Activated CD4-positive, alpha-beta T cell treated with anti-CD3 and anti-CD28 coated beads for 36 hours (primary cell): ENCODE measurements at regions of chr7 and their contacts with region 1.

Region 1: DNA sequence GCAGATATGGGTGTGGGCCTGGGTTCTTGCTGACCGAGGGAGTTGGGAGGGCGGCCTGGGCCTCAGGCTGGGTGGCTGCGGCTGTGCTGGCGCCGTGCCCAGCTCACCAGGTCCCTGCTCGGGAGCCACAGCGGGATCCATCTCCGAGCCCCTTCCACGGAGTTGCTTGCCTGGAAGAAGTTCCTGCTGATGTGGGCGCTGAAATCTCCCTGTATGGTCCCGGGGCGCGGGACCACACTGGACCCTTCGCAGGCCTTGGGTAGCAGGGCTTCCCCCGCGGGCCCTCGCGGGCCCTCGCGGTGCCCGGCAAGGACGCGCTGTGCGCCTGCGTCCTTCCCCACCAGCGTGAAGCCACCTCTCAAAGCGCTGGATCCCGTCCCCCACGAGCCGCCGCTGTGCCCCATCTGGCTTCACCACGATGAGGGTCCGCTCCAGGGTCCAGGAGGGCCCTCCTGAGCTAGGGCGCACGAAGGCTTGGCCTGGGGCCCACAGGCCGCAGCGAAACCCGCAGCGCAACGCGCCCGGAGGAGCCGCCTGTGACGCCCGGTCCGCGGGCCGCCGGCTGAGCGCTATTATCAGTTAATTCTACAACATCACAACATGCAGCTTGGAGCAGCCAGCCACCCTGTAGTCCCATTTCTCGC is 31.5 kb downstream of the RAB19 start:
- DNase-seq: no peak
- ATAC-seq: no peak
- H3K4me3 Mint-ChIP-seq: no peak overlapping the region
- H3K27ac Mint-ChIP-seq: no peak overlapping the region
- H3K4me1 Mint-ChIP-seq: peaks cover 8% of the 10 kb centered on the region
- H3K27me3 Mint-ChIP-seq: peaks cover 2% of the 10 kb centered on the region

Region 2: DNA sequence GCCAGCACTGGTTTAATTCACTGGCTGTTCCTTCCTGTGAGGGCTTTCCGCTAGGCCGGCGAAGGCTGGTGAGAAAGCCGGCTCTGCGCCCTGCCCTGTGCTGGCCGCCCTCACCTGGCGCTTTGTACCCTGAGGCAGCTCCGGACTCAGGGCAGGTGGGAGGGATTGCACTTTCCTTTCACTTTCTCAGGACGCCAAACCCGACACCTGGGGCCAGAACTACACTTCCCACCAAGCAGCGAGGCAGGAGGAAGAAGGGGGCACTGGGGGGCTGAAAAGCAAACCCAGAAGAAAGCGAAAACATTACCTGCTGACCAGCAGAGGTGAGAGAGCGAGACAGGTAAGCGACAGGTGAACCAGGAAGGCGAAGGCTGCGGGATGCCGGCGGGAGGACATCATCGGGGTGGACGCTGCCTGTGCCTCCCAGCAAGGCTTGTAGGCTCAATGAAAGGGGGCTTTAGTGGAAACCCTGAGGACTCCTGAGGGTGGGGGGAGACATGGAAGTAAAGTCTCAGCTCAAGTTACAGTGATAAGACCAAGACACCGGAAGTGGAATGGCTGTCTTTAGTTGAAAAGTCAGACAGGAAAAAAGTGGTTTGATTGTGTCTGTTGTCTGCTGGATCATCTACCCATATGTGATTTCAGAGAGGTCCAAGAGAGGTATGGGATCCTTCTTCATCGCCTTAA is 31.4 kb before region 1 on chr7 and contains the start of gene RAB19:
- CTCF ChIA-PET with region 1: no interaction called
- POLR2A ChIA-PET with region 1: no interaction called
- intact Hi-C with region 1: loop called in 1 of 2 experiments (anchors 5 kb)
- DNase-seq: peak; percentile 63
- ATAC-seq: peak; percentile 77
- H3K4me3 Mint-ChIP-seq: peak within 1 kb of the TSS; percentile 90
- H3K27ac Mint-ChIP-seq: peak within 1 kb of the TSS; percentile 97
- H3K4me1 Mint-ChIP-seq: peaks cover 35% of the 10 kb centered on the region
- H3K27me3 Mint-ChIP-seq: no peaks in the 10 kb centered on the region
- total RNA-seq, gene RAB19: 11.3 to 12.8 TPM